Natural killer cell (primary cell): ENCODE measurements at regions of chr9 and their contacts with region 1.

Region 1: DNA sequence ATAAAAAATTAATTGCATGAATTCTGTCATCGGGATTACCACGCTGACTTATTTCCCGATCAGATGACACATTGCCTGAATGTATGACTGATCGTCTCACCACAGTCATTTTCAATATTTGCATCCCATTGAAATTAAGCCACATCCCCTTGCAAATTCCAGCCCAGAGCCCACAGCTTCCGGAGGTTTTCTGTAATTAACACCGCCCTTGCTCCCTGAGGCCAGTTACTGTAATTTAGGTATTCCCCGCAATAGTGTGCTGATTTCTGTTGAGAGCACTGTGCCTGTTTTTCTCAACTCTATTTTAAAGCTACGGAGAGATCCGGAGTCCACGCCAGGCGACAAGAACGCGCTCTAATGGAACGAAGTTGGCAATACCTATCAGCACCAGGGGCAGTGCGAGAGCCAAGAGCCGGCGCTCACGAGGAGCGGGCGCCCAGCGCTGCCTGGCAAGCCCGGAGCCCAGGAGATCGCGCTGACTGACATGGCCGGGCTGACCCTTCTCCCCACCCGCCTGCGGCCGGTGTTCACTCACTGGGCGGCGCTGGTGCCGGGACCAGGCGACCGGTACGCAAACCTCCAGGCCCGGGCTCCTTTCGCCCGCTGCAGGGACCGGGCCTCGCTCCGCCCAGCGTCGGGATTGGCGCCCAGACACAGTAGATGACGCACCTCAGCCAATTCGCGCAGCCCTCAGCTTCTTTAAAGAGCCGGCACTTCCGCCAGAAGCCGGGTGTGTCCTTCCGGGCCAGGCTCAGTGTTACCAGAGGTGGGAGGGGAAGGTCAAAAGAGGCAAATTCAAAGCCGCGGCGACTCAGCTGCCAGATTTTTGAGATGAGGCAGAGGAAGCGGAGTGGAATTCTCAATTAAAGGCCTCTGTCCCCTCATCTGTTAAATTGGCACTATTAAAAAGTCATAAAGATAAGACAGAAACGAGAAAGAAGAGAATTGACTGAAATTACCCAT is at the start of gene PLGRKT:
- DNase-seq: peak; percentile 85 to 96
- ATAC-seq: peak; percentile 93 to 98 (median 96)
- H3K4me3 ChIP-seq: peak within 1 kb of the TSS; percentile 66
- H3K4me3 Mint-ChIP-seq: peak within 1 kb of the TSS; percentile 92
- H3K27ac ChIP-seq: peak within 1 kb of the TSS; percentile 91
- H3K27ac Mint-ChIP-seq: peak within 1 kb of the TSS; percentile 96 to 97
- H3K4me1 ChIP-seq: peaks cover 18% of the 10 kb centered on the region
- H3K4me1 Mint-ChIP-seq: peaks cover 24 to 27% of the 10 kb centered on the region in 2 donors
- H3K27me3 ChIP-seq: no peaks in the 10 kb centered on the region
- H3K27me3 Mint-ChIP-seq: no peaks in the 10 kb centered on the region
- CTCF ChIP-seq: no peak
- total RNA-seq, gene PLGRKT: 14.7 to 17.8 (median 17.3) TPM

Region 2: GRCh38 chr9:5186416-5187169 is 250.9 kb before region 1 on chr9:
- intact Hi-C with region 1: loop called (anchors 5 kb)
- DNase-seq: peak in 1 of 2 donors; percentile 85
- ATAC-seq: peak; percentile 68 to 91 (median 84)
- H3K4me3 ChIP-seq: no peak overlapping the region
- H3K4me3 Mint-ChIP-seq: no peak overlapping the region
- H3K27ac ChIP-seq: no peak overlapping the region
- H3K27ac Mint-ChIP-seq: no peak overlapping the region
- H3K4me1 ChIP-seq: no peaks in the 10 kb centered on the region
- H3K4me1 Mint-ChIP-seq: peaks cover 0 to 7% of the 10 kb centered on the region in 2 donors
- H3K27me3 ChIP-seq: no peaks in the 10 kb centered on the region
- H3K27me3 Mint-ChIP-seq: peaks cover 0 to 7% of the 10 kb centered on the region in 2 donors
- CTCF ChIP-seq: peak; percentile 76

Region 3: GRCh38 chr9:5450359-5451091 is 13.0 kb after region 1 on chr9 and contains the start of gene CD274:
- intact Hi-C with region 1: loop called (anchors 1 kb)
- DNase-seq: peak; percentile 73 to 90
- ATAC-seq: peak; percentile 96 to 97 (median 96)
- H3K4me3 ChIP-seq: peak within 1 kb of the TSS; percentile 67
- H3K4me3 Mint-ChIP-seq: peak within 1 kb of the TSS; percentile 96
- H3K27ac ChIP-seq: peak within 1 kb of the TSS; percentile 92
- H3K27ac Mint-ChIP-seq: peak within 1 kb of the TSS; percentile 94 to 98
- H3K4me1 ChIP-seq: peaks cover 15% of the 10 kb centered on the region
- H3K4me1 Mint-ChIP-seq: peaks cover 29 to 34% of the 10 kb centered on the region in 2 donors
- H3K27me3 ChIP-seq: no peaks in the 10 kb centered on the region
- H3K27me3 Mint-ChIP-seq: peaks cover 0 to 4% of the 10 kb centered on the region in 2 donors
- CTCF ChIP-seq: peak; percentile 45
- total RNA-seq, gene CD274: 4.9 to 7.2 (median 6.0) TPM

Region 4: GRCh38 chr9:5586391-5586802 is 148.9 kb after region 1 on chr9:
- intact Hi-C with region 1: loop called (anchors 1 kb)
- DNase-seq: peak in 1 of 2 donors; percentile 45
- ATAC-seq: no peak
- H3K4me3 ChIP-seq: no peak overlapping the region
- H3K4me3 Mint-ChIP-seq: no peak overlapping the region
- H3K27ac ChIP-seq: no peak overlapping the region
- H3K27ac Mint-ChIP-seq: peak overlapping the region in 1 of 2 donors; percentile 23
- H3K4me1 ChIP-seq: peaks cover 3% of the 10 kb centered on the region
- H3K4me1 Mint-ChIP-seq: peaks cover 0 to 10% of the 10 kb centered on the region in 2 donors
- H3K27me3 ChIP-seq: no peaks in the 10 kb centered on the region
- H3K27me3 Mint-ChIP-seq: peaks cover 0 to 2% of the 10 kb centered on the region in 2 donors
- CTCF ChIP-seq: no peak

Region 5: DNA sequence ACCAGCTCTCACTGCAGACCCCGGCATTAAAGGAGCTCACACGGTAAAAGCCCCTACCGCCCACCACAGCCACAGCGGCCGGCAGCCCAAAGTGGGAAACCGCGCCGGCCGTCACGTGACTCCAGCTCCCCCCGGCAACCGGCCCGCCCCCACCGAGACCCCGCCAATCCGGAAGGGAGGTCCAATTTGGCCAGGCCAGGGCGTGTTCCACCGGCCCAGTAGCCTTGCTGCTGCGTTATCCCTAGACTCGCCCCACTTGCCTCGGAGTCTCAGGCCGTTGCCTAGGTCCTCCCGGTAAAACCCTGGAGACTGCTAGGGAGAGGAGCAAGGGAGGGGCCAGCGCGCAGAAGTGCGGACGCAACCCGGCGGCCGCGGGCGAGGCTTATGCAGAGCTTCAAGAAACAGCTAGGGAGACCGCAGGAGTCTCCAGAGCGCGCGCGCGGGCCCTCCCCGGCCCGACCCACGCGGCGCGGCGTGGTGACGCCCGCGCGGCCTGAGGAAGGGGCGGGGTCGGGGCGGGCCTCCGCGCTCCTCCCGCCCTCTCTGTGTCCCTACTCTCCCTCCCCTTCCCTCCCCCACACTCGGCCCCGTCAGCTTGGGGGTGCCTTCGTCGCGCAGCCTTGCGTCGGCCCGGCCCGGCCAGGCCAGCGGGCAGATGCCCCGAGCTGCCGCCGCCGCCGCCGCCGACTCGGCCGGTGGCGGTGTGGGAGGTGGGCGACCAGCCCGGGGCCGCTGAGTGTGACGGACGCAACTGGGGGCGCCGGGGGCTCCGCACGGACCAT is 191.2 kb after region 1 on chr9 and contains the start of gene RIC1:
- intact Hi-C with region 1: loop called (anchors 2 kb)
- DNase-seq: peak; percentile 89 to 94
- ATAC-seq: peak; percentile 87 to 97 (median 88)
- H3K4me3 ChIP-seq: peak within 1 kb of the TSS; percentile 99
- H3K4me3 Mint-ChIP-seq: peak within 1 kb of the TSS; percentile 99
- H3K27ac ChIP-seq: peak within 1 kb of the TSS; percentile 92
- H3K27ac Mint-ChIP-seq: peak within 1 kb of the TSS; percentile 93
- H3K4me1 ChIP-seq: peaks cover 27% of the 10 kb centered on the region
- H3K4me1 Mint-ChIP-seq: peaks cover 49 to 57% of the 10 kb centered on the region in 2 donors
- H3K27me3 ChIP-seq: no peaks in the 10 kb centered on the region
- H3K27me3 Mint-ChIP-seq: no peaks in the 10 kb centered on the region
- CTCF ChIP-seq: no peak
- total RNA-seq, gene RIC1: 23.5 to 33.9 (median 31.8) TPM

Region 6: DNA sequence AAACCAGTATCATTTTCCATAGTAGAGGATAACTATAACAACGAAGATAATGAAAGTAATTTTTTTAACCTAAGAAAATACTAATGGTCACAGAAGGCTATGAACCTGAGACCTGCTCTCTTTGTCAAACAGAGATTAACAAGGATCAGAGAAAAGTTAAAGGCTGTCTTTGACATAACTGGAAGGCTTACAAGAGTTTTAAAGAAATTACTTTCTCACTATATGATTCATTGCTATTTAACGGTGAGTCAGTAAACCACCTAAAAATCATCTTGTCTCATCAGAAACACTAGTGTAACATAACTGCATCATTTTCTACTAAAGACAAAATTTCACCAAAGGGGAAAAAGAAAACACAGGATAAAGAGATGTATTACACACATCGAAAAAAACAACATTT is 472.4 kb after region 1 on chr9:
- intact Hi-C with region 1: no loop called
- DNase-seq: no peak
- ATAC-seq: no peak
- H3K4me3 ChIP-seq: no peak overlapping the region
- H3K4me3 Mint-ChIP-seq: no peak overlapping the region
- H3K27ac ChIP-seq: no peak overlapping the region
- H3K27ac Mint-ChIP-seq: no peak overlapping the region
- H3K4me1 ChIP-seq: no peaks in the 10 kb centered on the region
- H3K4me1 Mint-ChIP-seq: peaks cover 0 to 6% of the 10 kb centered on the region in 2 donors
- H3K27me3 ChIP-seq: no peaks in the 10 kb centered on the region
- H3K27me3 Mint-ChIP-seq: no peaks in the 10 kb centered on the region
- CTCF ChIP-seq: no peak